ENCODE measurements at regions of chr1 and their contacts with region 1.

Region 1: DNA sequence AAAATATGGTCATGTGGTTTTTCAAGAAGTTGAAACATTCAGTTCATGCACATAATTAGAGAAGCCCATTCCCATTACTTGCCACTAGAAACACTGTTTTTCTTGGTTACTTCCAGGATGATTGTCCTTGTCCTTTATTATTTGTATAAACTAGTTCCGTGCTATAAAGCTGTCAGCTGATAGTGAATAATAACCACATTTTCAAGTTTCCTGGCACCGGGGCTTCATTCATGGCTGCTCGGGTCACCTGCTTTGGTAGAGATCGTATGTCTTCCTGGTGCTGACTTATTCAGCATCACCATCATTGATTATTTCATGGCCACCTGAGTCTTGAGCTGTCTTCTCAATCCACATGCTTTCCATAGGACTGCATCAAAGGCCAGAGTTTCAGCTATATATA is 62.9 kb upstream of the ZNF326 start:
- DNase-seq: no peak
- H3K4me3 ChIP-seq: no peak overlapping the region
- H3K27me3 ChIP-seq: no peaks in the 10 kb centered on the region
- CTCF ChIP-seq: no peak

Region 2: DNA sequence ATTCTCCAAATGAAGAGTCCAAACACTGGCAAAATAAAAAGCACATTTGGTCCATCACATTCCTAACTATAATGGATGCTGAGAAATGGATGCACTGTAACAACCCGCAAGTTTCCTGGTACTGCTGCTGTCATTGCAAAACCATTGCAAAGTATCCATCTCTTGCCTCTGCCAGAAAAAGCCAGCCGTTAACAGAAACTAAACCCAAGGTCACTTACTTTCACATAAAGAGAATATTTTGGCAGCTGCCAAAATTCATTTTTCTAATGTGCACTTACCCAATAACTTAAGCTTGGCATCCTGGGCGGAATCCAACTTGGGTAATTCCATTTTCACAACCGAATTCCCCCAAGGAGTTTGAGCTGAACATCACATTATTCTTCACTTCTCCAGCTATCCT is 188.2 kb before region 1 on chr1:
- CTCF ChIA-PET with region 1: no interaction called
- POLR2A ChIA-PET with region 1: no interaction called
- DNase-seq: no peak
- H3K4me3 ChIP-seq: no peak overlapping the region
- H3K27me3 ChIP-seq: peaks cover 3% of the 10 kb centered on the region
- CTCF ChIP-seq: no peak

Region 3: DNA sequence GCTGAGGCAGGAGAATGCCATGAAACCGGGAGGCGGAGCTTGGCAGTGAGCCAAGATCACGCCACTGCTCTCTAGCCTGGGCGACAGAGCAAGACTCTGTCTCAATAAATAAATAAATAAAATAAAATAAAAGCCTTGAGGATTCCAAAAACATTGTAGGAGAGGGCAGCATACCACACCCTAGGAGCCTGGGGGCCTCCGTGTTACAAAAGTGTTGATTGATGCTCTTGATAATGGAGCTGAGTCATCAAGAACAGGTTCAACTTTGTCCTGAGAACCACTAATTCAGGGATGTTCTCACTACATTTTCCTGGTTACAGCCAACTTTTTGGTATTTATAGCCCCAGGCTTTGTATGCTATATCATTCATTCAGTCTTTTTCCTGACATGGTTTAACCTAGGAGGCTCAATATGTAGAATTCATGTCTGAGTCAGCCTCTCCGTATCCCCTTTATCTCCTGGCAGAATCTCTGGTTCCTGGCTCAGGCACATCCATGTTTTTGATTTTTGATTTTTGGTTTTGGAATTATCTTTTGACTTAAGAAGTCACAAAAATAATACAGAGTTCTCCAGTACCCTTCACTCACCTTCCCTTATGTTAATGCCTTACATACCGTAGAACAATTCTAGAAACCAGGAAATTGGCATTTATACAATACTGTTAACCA is 41.7 kb before region 1 on chr1:
- CTCF ChIA-PET with region 1: no interaction called
- POLR2A ChIA-PET with region 1: no interaction called
- DNase-seq: no peak
- H3K4me3 ChIP-seq: no peak overlapping the region
- H3K27me3 ChIP-seq: no peaks in the 10 kb centered on the region
- CTCF ChIP-seq: no peak

Region 4: DNA sequence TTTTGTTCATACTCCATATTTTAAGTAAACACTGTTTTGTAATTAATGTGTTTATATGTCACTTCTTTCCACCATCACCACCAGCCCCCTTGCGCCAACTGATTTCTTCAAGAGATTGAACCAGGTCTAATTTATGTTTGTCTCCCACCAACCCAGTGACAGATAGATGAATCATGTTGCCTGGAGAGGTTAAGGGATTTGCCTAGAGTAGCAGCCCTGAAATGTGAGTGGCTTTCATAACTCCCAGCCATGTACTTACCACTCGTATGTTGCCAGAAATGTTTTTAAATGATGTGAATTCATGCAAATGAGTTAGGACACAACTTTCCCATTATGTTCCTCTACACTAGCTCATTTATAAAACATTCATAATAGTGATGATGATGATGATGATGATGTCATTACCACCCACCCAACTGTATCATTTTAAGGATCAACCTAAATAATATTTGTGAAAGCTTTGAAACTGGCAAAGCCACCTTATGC is 24.2 kb before region 1 on chr1:
- CTCF ChIA-PET with region 1: no interaction called
- POLR2A ChIA-PET with region 1: no interaction called
- DNase-seq: no peak
- H3K4me3 ChIP-seq: no peak overlapping the region
- H3K27me3 ChIP-seq: no peaks in the 10 kb centered on the region
- CTCF ChIP-seq: no peak

Region 5: GRCh38 chr1:89974701-89975470 is 42.9 kb after region 1 on chr1:
- CTCF ChIA-PET with region 1: no interaction called
- POLR2A ChIA-PET with region 1: interaction called, 19 read pairs
- DNase-seq: peak; percentile 63
- H3K4me3 ChIP-seq: no peak overlapping the region
- H3K27me3 ChIP-seq: no peaks in the 10 kb centered on the region
- CTCF ChIP-seq: no peak

Measured in BJ (cell line).